A673 (cell line): ENCODE measurements at regions of chr21 and their contacts with region 1.

Region 1: DNA sequence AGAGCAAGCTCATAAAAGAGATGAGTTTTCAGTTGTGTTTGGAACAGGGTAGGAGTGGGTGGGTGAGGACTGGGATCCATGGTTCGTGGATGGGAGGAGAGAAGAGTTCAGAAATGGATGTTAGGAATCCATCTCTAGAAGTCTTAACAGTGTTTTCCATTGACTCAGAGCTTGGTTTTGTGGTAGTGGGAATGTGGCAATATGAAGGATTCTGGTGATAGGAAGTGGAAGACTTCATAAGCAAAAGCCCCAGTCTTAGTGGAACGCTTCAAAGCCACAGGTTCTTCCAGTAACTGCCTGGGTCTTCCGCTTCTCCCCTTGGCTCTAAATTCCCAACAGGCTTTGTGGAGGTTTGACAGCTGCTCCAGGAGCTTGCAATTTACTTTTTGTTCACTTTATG is 167.9 kb downstream of the KCNJ6 start:
- DNase-seq: no peak
- H3K4me3 ChIP-seq: no peak overlapping the region
- H3K27ac ChIP-seq: no peak overlapping the region
- H3K4me1 ChIP-seq: no peaks in the 10 kb centered on the region
- H3K27me3 ChIP-seq: peaks cover 49% of the 10 kb centered on the region
- CTCF ChIP-seq: no peak

Region 2: GRCh38 chr21:37939251-37939650 is 190.9 kb after region 1 on chr21:
- CTCF ChIA-PET with region 1: no interaction called
- POLR2A ChIA-PET with region 1: no interaction called
- intact Hi-C with region 1: no loop called
- DNase-seq: no peak
- H3K4me3 ChIP-seq: no peak overlapping the region
- H3K27ac ChIP-seq: no peak overlapping the region
- H3K4me1 ChIP-seq: no peaks in the 10 kb centered on the region
- H3K27me3 ChIP-seq: peaks cover 6% of the 10 kb centered on the region
- CTCF ChIP-seq: no peak

Region 3: DNA sequence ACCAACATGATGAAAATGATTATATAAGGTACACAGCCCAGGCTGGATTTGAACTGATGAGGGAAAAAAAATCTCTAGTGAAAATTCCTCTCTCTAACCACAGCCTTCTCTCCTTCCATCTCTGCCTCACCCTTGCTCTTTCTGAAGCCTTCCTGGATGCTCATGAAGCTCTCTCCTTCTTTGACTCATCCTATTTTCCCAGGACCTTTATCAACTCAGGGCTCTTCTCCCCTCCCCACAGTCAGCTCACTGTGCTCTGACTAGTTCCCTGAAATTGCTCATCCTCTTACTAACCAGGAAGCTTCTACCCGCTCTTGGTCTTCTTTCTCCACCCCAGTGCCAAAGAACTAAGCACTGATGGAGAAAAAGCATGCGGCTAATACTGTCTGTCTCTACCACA is 796.3 kb after region 1 on chr21:
- CTCF ChIA-PET with region 1: no interaction called
- POLR2A ChIA-PET with region 1: interaction called, 15 read pairs
- intact Hi-C with region 1: no loop called
- DNase-seq: no peak
- H3K4me3 ChIP-seq: no peak overlapping the region
- H3K27ac ChIP-seq: no peak overlapping the region
- H3K4me1 ChIP-seq: no peaks in the 10 kb centered on the region
- H3K27me3 ChIP-seq: peaks cover 8% of the 10 kb centered on the region
- CTCF ChIP-seq: no peak